Caco-2 (cell line): ENCODE measurements at regions of chr16 and their contacts with region 1.

Region 1: DNA sequence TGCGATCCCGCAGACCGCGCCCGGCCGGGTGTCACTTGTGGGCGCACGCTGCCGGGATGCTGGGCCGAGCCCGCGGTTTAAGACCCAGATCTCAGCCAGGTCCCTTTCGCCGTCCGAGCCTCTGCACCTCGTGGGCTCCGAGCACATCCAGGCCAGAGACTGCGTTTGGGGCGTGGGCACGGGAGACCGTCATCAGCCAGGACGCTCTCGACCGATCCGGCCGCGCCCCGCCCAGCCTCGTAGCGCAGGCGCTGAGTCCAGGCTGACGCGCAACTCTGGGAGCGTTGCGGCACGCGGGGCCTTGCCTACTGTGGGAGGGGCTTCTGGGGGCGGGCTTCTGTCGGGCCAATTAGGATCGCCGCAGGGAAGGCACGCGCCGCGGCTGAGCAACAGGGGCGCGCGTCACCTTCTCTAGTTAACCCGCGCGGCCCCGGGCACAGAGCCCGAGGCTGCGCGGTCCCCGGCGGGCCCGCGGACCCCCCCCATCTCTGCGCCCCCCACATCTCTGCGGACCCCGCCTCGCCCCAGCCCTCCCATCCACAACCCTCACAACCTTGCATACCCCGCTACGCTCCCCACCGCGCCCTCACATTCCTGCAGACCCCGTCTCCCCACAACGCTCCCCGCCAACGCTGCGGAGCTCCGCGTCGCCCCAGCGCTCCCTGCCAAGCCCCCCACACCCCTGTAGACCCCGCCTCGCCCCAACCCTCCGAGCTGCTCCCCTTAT is 722 bp upstream of the CEMP1 start:
- DNase-seq: peak; percentile 97
- H3K4me3 ChIP-seq: peak overlapping the region; percentile 78
- H3K4me3 Mint-ChIP-seq: peak overlapping the region; percentile 86
- H3K27ac Mint-ChIP-seq: peak overlapping the region; percentile 94
- H3K4me1 ChIP-seq: peaks cover 13% of the 10 kb centered on the region
- H3K4me1 Mint-ChIP-seq: no peaks in the 10 kb centered on the region
- H3K27me3 ChIP-seq: no peaks in the 10 kb centered on the region
- H3K27me3 Mint-ChIP-seq: no peaks in the 10 kb centered on the region
- CTCF ChIP-seq: no peak

Region 2: GRCh38 chr16:2308089-2308962 is 223.6 kb before region 1 on chr16:
- CTCF ChIA-PET with region 1: no interaction called
- POLR2A ChIA-PET with region 1: no interaction called
- intact Hi-C with region 1: no loop called
- DNase-seq: no peak
- H3K4me3 ChIP-seq: no peak overlapping the region
- H3K4me3 Mint-ChIP-seq: no peak overlapping the region
- H3K27ac Mint-ChIP-seq: no peak overlapping the region
- H3K4me1 ChIP-seq: no peaks in the 10 kb centered on the region
- H3K4me1 Mint-ChIP-seq: no peaks in the 10 kb centered on the region
- H3K27me3 ChIP-seq: no peaks in the 10 kb centered on the region
- H3K27me3 Mint-ChIP-seq: no peaks in the 10 kb centered on the region
- CTCF ChIP-seq: no peak

Region 3: GRCh38 chr16:2520092-2520783 is 11.7 kb before region 1 on chr16 and contains the start of gene AMDHD2:
- CTCF ChIA-PET with region 1: interaction called, 4 read pairs
- POLR2A ChIA-PET with region 1: interaction called, 15 read pairs
- intact Hi-C with region 1: no loop called
- DNase-seq: peak; percentile 89 to 90
- H3K4me3 ChIP-seq: peak within 1 kb of the TSS; percentile 74
- H3K4me3 Mint-ChIP-seq: peak within 1 kb of the TSS; percentile 87
- H3K27ac Mint-ChIP-seq: peak within 1 kb of the TSS; percentile 89
- H3K4me1 ChIP-seq: peaks cover 37% of the 10 kb centered on the region
- H3K4me1 Mint-ChIP-seq: peaks cover 45% of the 10 kb centered on the region
- H3K27me3 ChIP-seq: no peaks in the 10 kb centered on the region
- H3K27me3 Mint-ChIP-seq: no peaks in the 10 kb centered on the region
- CTCF ChIP-seq: no peak
- total RNA-seq, gene AMDHD2: 62.3 and 67.2 TPM in 2 replicates